Activated CD4-positive, alpha-beta T cell treated with anti-CD3 and anti-CD28 coated beads for 36 hours (primary cell): ENCODE measurements at regions of chr10 and their contacts with region 1.

Region 1: DNA sequence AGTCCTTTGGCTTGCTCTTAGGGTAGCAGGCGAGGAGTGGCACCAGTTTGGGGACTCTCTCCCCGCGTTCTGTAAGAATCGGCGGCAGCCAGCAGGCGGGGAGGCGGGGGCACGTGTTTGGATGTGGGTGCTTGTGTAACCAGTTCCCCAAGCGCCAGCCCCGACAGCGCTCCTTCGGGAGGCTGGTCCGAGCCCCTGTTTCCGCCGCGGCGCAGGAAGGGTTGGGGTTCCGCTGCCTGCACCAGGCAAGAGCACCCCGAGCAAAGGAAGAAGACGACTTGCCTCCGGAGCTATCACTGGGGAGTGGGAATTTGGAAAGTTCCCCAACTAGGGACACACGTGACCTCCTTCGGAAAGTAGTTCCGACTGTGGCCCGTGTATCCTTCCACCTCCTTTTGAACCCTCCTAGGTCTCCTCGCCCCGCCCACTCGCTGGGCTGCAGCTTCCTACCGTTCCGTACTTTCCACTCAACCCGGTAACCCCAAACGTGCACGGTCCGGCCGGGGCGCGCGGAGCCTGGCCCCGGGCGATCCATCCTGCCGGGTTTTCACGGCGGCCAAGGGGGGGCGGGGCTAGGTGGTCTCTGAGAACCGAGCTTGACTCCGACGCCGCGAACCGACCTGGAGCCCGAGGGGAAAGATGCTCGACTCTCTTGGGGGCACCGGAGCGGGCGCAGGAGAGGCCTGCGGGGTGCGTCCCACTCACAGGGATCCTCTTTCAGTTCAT is 1.2 kb downstream of the KLLN start:
- DNase-seq: peak; percentile 96
- ATAC-seq: peak; percentile 66
- H3K4me3 Mint-ChIP-seq: peak overlapping the region; percentile 91
- H3K27ac Mint-ChIP-seq: peak overlapping the region; percentile 92
- H3K4me1 Mint-ChIP-seq: peaks cover 30% of the 10 kb centered on the region
- H3K27me3 Mint-ChIP-seq: no peaks in the 10 kb centered on the region

Region 2: DNA sequence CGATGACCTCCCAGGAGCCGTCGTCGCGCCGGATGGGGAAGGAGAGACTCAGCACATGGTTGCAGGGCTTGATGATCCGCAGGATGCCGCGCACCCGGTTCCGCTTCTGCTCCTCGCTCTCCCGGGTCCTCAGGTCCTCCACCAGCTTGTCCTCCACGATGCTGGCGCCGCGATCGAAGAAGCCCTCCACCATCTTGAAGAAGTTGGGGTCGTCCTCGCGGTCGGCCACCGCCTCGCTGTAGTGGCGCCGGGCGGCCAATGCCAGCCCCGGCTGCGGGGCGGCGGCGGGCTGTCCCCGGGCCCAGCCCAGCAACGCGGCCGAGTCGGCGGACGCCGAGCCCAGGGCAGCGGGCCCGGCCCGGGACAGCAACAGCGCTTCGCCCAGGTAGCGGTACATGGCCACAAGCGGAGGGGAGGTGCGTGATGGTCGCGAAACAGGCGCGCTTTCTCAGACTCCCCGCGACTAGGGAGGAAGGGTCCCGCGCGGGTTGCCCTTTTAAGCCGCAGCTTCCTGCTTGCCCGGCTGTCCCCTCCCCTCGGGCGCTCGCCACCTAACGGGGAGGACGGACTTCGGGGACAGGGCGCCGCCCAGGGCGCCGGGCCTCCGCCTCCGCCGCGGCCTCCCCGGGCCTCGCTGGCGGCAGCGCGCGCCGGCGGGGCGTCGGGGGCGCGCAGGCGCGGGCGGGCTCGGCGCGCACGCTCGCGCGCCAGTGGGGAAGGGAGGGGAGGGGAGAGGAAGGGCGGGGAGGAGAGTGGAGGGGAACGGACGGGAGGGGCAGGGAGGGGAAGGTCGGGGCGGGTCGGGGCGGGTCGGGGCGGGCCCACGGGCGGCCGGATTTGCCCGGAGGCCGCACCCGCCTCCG is 767.5 kb before region 1 on chr10 and contains the starts of genes GLUD1 and SHLD2:
- CTCF ChIA-PET with region 1: no interaction called
- POLR2A ChIA-PET with region 1: no interaction called
- intact Hi-C with region 1: loop called in 1 of 2 experiments (anchors 10 kb)
- DNase-seq: peak; percentile 94
- ATAC-seq: peak; percentile 80
- H3K4me3 Mint-ChIP-seq: peak within 1 kb of the TSS; percentile 85
- H3K27ac Mint-ChIP-seq: peak within 1 kb of the TSS; percentile 91
- H3K4me1 Mint-ChIP-seq: peaks cover 34% of the 10 kb centered on the region
- H3K27me3 Mint-ChIP-seq: no peaks in the 10 kb centered on the region
- total RNA-seq, gene GLUD1: 98.4 to 125 TPM
- total RNA-seq, gene SHLD2: 29.7 to 29.9 TPM

Region 3: GRCh38 chr10:87925570-87925969 is 63.5 kb after region 1 on chr10:
- CTCF ChIA-PET with region 1: no interaction called
- POLR2A ChIA-PET with region 1: no interaction called
- intact Hi-C with region 1: loop called in 1 of 2 experiments (anchors 5 kb)
- DNase-seq: no peak
- ATAC-seq: no peak
- H3K4me3 Mint-ChIP-seq: no peak overlapping the region
- H3K27ac Mint-ChIP-seq: no peak overlapping the region
- H3K4me1 Mint-ChIP-seq: peaks cover 83% of the 10 kb centered on the region
- H3K27me3 Mint-ChIP-seq: no peaks in the 10 kb centered on the region

Region 4: DNA sequence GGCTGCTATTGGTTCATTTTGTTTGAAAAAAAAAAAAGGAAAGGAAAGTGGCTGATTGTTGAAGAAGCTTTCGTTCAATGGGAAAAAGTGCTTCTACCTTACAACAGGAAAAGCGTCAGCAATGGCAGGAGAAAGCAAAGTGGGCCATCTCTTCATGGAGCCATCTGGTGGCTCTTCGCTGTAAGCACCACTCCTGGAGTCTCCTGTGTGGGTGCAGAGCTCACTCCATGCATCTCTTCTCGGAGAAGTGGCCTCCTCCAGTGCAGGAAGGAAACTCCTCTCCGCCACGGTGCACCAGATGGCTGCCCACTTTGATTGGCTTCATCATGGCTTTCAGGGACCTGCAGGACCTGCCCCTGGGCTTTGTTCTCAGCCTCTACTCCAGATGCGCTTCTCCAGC is 252.3 kb after region 1 on chr10:
- CTCF ChIA-PET with region 1: interaction called, 5 read pairs
- POLR2A ChIA-PET with region 1: no interaction called
- intact Hi-C with region 1: loop called (anchors 1 to 2 kb)
- DNase-seq: peak; percentile 47
- ATAC-seq: no peak
- H3K4me3 Mint-ChIP-seq: no peak overlapping the region
- H3K27ac Mint-ChIP-seq: no peak overlapping the region
- H3K4me1 Mint-ChIP-seq: peaks cover 9% of the 10 kb centered on the region
- H3K27me3 Mint-ChIP-seq: peaks cover 15% of the 10 kb centered on the region

Region 5: GRCh38 chr10:88270871-88271713 is 409.0 kb after region 1 on chr10:
- CTCF ChIA-PET with region 1: interaction called, 4 read pairs
- POLR2A ChIA-PET with region 1: no interaction called
- intact Hi-C with region 1: loop called (anchors 2 to 5 kb)
- DNase-seq: peak; percentile 65
- ATAC-seq: peak; percentile 93
- H3K4me3 Mint-ChIP-seq: no peak overlapping the region
- H3K27ac Mint-ChIP-seq: peak overlapping the region; percentile 64
- H3K4me1 Mint-ChIP-seq: peaks cover 37% of the 10 kb centered on the region
- H3K27me3 Mint-ChIP-seq: peaks cover 3% of the 10 kb centered on the region

Region 6: GRCh38 chr10:88386821-88387773 is 525.0 kb after region 1 on chr10:
- CTCF ChIA-PET with region 1: interaction called, 6 read pairs
- POLR2A ChIA-PET with region 1: no interaction called
- intact Hi-C with region 1: loop called (anchors 1 to 2 kb)
- DNase-seq: no peak
- ATAC-seq: peak; percentile 36
- H3K4me3 Mint-ChIP-seq: no peak overlapping the region
- H3K27ac Mint-ChIP-seq: no peak overlapping the region
- H3K4me1 Mint-ChIP-seq: peaks cover 16% of the 10 kb centered on the region
- H3K27me3 Mint-ChIP-seq: no peaks in the 10 kb centered on the region

Region 7: DNA sequence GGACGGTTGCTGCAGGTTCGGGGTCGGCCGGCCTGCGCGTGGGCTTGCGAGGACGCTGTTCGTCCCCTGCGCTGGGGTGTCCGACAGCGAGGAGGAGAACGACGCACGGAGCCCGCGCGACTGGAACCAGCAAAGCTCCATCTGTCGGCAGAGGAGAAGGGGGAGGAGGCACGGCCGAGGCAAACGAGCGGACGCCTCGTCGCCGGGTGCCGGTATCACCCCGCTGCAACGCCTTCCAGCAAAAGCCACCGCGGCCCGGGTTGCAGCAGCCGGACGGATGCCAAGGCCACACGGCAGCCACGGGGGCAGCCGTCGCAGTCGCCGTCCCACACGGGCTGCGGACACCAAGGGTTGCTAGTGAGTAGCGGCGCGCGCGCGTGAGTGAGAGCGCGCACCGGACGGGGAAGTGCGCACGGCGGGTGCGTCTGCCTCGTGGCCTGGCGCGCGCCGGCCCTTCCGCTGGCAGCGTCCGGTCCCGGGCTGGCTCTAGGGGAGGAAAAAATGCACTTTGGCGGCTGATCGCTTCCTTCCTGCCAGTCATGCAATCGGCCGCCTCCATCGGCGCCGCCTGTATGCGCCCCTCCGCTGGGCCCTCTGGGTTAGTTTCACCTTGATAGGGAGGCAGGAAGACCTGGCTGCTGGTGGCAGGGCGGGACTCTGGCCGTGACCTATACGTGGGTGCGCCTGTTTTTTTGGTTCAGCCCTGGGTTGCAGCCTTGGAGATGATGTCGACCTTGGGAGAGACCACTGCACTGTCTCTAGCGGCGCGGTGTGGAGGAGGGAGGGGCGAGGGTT is 1018.4 kb after region 1 on chr10:
- CTCF ChIA-PET with region 1: no interaction called
- POLR2A ChIA-PET with region 1: no interaction called
- intact Hi-C with region 1: loop called in 1 of 2 experiments (anchors 1 kb)
- DNase-seq: peak; percentile 87
- ATAC-seq: peak; percentile 81
- H3K4me3 Mint-ChIP-seq: peak overlapping the region; percentile 97
- H3K27ac Mint-ChIP-seq: peak overlapping the region; percentile 98
- H3K4me1 Mint-ChIP-seq: peaks cover 65% of the 10 kb centered on the region
- H3K27me3 Mint-ChIP-seq: no peaks in the 10 kb centered on the region